ENCODE measurements at regions of chr10 and their contacts with region 1.

Region 1: GRCh38 chr10:129192344-129193128 is 274.5 kb upstream of the MGMT start:
- DNase-seq: peak in 4 of 5 donors; percentile 17 to 69 (median 30)
- H3K4me3 ChIP-seq: no peak overlapping the region
- H3K27ac ChIP-seq: no peak overlapping the region
- H3K4me1 ChIP-seq: no peaks in the 10 kb centered on the region
- H3K27me3 ChIP-seq: no peaks in the 10 kb centered on the region
- CTCF ChIP-seq: no peak
- EP300 ChIP-seq: no peak
- POLR2A ChIP-seq: no peak

Region 2: DNA sequence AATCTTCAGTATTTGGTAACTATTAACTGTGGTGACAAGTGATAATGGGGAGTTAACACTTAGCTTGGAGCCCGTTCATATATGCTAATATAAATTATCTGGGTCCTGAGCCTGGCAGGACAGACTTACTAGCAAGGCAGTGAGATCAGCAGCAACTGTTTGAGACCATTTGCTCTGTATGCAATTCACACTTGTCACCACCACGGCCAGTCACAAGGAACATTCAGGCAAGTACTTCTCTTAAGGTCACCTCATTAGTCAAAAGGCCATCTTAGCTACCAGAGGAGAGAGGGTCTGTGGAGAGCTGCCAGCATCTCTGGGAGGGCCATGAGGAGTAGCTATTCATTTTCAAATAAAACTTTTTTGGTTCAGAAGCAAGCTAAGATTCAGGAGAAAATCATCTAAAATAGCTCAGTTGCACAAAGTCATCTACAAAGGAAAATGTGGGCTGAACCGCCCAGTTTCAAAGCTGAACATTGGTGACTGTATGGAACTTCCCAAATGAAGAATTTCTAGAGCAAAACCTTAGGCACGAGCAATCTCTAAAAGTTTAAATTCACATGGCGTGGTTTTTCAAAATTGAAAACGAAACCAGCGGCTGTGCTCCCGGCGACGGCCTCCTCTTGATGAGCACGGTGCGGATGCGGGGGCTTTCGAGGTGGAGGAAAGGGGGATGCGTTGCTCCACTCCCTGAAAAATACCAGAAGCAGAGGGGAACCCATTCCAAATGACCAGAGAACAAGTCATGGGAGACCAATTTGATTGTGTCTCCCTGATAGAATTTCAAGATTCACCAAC is 41.0 kb after region 1 on chr10:
- intact Hi-C with region 1: loop called in 1 of 4 experiments (anchors 1 kb)
- DNase-seq: no peak
- H3K4me3 ChIP-seq: no peak overlapping the region
- H3K27ac ChIP-seq: no peak overlapping the region
- H3K4me1 ChIP-seq: no peaks in the 10 kb centered on the region
- H3K27me3 ChIP-seq: no peaks in the 10 kb centered on the region
- CTCF ChIP-seq: no peak
- EP300 ChIP-seq: no peak
- POLR2A ChIP-seq: no peak